ENCODE measurements at regions of chr4 and their contacts with region 1.

Region 1: GRCh38 chr4:169385376-169385775 is 114.6 kb upstream of the SH3RF1 start:
- DNase-seq: no peak

Region 2: DNA sequence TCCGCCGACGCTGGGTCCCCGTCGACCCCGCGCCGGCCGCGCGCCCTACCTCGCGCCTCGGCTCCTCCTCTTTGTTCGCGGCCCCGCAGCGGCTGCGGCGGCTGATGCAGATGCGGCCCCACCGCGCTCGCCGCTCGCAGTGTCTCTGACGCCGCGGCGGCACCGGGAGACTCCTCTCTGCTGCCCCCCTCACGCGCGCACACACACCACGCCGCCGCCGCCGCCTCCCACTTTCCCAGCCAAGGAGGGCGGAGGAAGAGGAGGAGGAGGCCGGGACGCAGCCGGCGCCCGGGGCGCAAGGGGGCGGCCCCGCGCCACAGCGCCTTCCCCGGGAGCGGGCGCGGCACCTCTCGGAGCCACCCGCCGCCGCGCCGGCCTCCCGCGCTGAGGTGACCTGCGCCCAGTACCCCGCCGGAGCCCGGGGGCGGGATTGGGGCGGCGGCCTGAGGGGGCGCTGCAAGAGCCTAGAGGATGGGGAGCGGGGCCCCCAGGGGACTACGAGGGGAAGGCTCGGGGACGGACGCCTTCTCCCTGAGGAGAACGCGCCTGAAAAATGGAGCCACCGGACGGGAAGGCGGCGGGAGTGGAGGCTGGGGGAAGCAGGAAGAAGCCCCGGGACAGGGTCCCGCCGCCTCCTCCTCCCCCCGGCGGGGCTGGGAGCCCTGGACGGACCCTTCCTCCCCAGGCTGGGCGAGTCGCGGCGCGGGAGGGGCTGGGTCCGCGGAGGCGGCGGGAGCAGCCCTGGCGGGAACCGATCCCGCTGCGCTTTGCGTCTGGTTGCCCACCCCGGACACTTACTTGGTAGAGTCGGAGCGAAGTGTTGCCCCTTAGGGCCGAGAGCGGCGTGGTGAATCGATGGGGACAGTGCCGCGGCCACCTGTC is 114.3 kb before region 1 on chr4 and contains the start of gene SH3RF1:
- intact Hi-C with region 1: loop called in 1 of 2 experiments (anchors 5 kb)
- DNase-seq: peak; percentile 94
- total RNA-seq, gene SH3RF1: 13.8 to 20.3 TPM

Region 3: GRCh38 chr4:169410839-169411770 is 25.7 kb after region 1 on chr4:
- intact Hi-C with region 1: no loop called
- DNase-seq: no peak

Region 4: DNA sequence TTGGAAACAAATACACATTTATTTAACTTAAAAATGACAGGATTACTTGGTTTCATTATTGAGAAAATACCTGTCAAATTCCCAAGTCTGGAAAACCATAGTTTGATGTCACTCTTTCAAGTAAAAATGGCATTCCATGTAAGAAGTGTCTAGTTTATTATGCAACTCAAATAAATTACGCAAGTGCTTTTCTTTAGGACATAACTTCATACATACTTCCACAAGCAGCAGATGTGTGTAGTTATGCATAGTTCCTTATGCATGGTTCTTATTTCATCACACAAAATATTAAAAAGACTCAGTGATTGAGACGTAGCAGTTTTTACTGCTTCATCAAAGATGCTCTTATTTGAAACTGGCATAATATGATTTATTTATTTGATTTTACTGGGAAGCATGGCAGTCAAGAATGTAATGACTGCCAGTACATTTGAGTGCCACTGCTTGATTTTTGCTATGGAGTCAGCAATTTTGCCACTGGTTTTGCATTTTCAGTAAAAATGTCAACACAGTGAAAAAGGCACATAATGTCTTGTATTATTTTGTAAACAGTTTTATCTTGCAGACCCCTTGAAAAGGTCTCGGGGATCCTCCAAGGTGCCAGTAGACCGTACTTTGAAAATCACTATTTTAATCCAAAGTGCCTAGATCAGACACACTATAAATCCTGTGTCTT is 297.1 kb after region 1 on chr4:
- intact Hi-C with region 1: no loop called
- DNase-seq: no peak

Measured in posterior vena cava (tissue), 2 donors.